Calu3 (cell line): ENCODE measurements at regions of chr5 and their contacts with region 1.

Region 1: DNA sequence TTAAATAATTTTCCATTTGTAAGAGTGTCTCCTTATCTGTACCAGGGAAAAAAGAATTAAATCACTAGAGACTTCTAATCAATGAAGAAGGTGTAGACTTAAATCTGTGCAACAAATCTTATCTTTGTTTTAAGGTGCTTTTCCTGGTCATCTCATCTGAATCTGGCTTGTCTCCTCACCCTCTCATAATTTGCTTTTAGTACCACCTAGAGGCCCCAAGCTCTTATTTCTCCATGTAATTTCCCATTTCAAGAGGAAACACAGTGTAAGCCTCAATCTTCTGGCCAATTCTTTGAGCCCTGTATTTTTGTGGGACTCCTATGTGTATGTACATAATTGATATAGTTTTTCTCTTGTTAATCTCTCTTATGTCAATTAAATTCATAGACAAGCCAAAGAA is 1975.4 kb upstream of the CDH6 start:
- DNase-seq: no peak
- H3K4me3 Mint-ChIP-seq: no peak overlapping the region
- H3K27ac Mint-ChIP-seq: no peak overlapping the region
- H3K4me1 Mint-ChIP-seq: peaks cover 5% of the 10 kb centered on the region
- H3K27me3 Mint-ChIP-seq: no peaks in the 10 kb centered on the region
- CTCF ChIP-seq: no peak

Region 2: GRCh38 chr5:28903643-28904042 is 314.5 kb before region 1 on chr5:
- CTCF ChIA-PET with region 1: no interaction called
- intact Hi-C with region 1: loop called (anchors 10 kb)
- DNase-seq: no peak
- H3K4me3 Mint-ChIP-seq: no peak overlapping the region
- H3K27ac Mint-ChIP-seq: no peak overlapping the region
- H3K4me1 Mint-ChIP-seq: no peaks in the 10 kb centered on the region
- H3K27me3 Mint-ChIP-seq: no peaks in the 10 kb centered on the region
- CTCF ChIP-seq: no peak